Endothelial cell of umbilical vein (primary cell): ENCODE measurements at regions of chr5 and their contacts with region 1.

Region 1: GRCh38 chr5:170120576-170120975 is 14.9 kb downstream of the FOXI1 start:
- DNase-seq: no peak
- H3K4me3 ChIP-seq: no peak overlapping the region
- H3K27ac ChIP-seq: no peak overlapping the region
- H3K4me1 ChIP-seq: peaks cover 8% of the 10 kb centered on the region
- H3K27me3 ChIP-seq: no peaks in the 10 kb centered on the region
- CTCF ChIP-seq: no peak
- POLR2A ChIP-seq: no peak

Region 2: GRCh38 chr5:169778622-169779596 is 341.7 kb before region 1 on chr5:
- CTCF ChIA-PET with region 1: no interaction called
- POLR2A ChIA-PET with region 1: no interaction called
- dilution Hi-C with region 1: no loop called
- intact Hi-C with region 1: no loop called
- DNase-seq: no peak
- H3K4me3 ChIP-seq: no peak overlapping the region
- H3K27ac ChIP-seq: no peak overlapping the region
- H3K4me1 ChIP-seq: no peaks in the 10 kb centered on the region
- H3K27me3 ChIP-seq: no peaks in the 10 kb centered on the region
- CTCF ChIP-seq: no peak
- POLR2A ChIP-seq: no peak

Region 3: DNA sequence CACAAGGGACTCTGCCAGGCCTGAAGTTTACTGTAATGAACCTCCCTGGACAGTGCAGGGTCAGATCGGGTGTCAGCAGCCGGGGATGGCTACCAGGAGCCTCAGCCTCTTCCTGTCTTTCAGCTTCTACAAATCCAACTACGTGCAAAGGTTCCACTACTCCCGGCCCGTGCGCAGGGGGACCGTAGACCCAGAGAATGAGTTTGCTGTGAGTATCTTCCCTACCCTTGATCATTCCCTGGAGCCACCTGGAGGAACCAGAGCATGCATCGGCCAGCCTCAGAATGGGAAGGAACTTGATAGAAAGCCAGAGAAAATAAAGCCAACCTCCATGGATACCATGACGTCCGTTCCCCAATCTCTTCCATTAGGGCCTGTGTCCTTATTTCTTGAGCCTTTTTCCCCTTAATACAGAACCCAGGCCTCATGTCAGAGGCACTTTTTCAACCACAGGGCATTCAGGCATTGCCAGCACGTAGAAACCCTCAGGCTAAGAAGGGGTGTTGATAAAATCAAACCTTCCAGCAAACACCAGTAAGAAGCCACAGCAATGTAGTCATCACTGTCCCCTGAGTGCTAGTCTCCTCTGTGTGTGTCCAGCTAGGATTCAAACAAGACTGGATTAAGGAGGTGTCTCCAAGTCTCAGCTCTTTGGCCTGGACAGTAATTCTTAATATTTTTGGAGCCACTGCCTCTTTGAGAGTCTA is 63.9 kb before region 1 on chr5:
- CTCF ChIA-PET with region 1: no interaction called
- POLR2A ChIA-PET with region 1: no interaction called
- dilution Hi-C with region 1: no loop called
- intact Hi-C with region 1: no loop called
- DNase-seq: peak; percentile 5
- H3K4me3 ChIP-seq: no peak overlapping the region
- H3K27ac ChIP-seq: no peak overlapping the region
- H3K4me1 ChIP-seq: peaks cover 14% of the 10 kb centered on the region
- H3K27me3 ChIP-seq: no peaks in the 10 kb centered on the region
- CTCF ChIP-seq: no peak
- POLR2A ChIP-seq: no peak

Region 4: GRCh38 chr5:170080217-170080616 is 40.4 kb before region 1 on chr5:
- CTCF ChIA-PET with region 1: no interaction called
- POLR2A ChIA-PET with region 1: no interaction called
- dilution Hi-C with region 1: no loop called
- intact Hi-C with region 1: no loop called
- DNase-seq: no peak
- H3K4me3 ChIP-seq: no peak overlapping the region
- H3K27ac ChIP-seq: no peak overlapping the region
- H3K4me1 ChIP-seq: no peaks in the 10 kb centered on the region
- H3K27me3 ChIP-seq: peaks cover 0 to 4% of the 10 kb centered on the region in 2 experiments
- CTCF ChIP-seq: no peak
- POLR2A ChIP-seq: no peak

Region 5: DNA sequence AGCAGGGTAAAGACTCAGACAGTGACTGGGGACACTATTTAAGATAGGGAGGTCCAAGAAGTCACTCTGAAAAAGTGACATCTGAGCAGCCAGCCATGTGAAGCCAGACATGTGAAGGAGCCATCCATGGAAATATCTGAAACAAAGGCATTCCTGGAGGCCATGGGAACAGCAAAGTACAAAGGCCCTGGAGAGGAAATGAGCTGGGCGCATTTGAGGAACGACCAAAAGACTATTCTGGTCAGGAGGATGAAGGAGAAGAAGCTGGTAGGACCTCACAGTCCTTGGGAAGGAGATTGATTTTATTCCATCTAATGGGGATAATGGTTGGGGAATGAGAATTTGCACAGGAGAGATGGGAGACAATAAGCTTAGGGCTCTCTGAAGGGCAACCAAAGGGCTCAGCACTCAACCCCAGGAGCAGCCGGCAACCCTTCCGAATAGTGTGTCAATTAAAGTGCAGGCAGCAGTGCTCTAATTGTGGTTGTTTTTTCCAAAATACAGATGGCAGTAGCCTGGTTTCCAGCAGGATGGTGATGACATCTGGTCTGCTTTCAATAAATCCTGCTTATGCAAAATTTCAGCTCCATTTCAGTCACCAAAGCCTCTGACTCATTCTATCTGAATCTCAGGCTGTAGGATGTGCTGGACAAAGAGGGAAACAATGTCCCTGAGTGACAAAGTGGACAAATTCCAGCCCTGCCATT is 11.8 kb after region 1 on chr5:
- CTCF ChIA-PET with region 1: interaction called, 15 read pairs
- POLR2A ChIA-PET with region 1: no interaction called
- dilution Hi-C with region 1: no loop called
- intact Hi-C with region 1: no loop called
- DNase-seq: peak; percentile 71
- H3K4me3 ChIP-seq: no peak overlapping the region
- H3K27ac ChIP-seq: peak overlapping the region; percentile 42
- H3K4me1 ChIP-seq: peaks cover 47% of the 10 kb centered on the region
- H3K27me3 ChIP-seq: no peaks in the 10 kb centered on the region
- CTCF ChIP-seq: no peak
- POLR2A ChIP-seq: no peak